Esophagus squamous epithelium (tissue), 5 donors: ENCODE measurements at regions of chr11 and their contacts with region 1.

Region 1: DNA sequence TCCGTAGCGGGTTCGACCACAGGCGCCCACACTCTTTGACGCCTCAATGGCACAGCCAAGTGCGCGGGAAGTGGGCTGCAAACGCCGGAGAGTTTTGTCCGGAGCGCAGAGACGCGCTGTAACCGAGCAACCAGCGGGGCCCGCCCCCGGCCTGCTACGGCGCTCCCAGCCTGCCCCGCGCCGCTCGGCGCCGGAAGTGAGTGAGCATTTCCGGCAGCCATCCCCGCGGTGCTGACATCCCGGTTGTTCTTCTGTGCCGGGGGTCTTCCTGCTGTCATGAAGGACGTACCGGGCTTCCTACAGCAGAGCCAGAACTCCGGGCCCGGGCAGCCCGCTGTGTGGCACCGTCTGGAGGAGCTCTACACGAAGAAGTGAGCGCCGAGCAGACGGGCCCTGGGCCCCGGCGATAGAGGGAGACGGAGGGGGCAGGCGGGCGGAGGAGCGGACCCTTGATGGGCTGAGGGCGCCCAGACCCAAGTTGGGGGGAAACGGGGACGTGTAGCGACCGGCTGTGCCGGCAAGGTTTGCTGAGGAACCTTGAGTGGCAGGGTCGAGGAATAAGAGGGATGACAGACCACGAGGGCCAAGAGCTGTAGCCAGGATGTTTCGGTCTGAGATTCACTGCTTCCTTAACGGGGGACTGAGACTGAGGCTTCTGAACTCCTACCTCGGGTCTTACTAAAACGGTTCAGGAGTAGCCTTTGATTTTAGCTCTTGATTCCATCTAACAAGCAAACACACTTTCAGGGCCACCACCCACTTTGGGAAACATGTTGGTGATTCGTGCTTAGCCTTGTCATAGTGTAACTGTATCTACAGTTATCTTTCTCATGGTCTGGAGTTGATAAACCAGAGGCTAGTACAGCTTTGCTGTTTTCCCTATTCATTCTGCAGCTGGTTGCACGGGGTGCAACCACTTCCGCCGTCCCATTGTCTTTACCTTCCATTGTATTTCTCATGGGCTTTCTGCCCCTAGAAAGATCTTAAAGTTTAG is at the start of gene PSMD13:
- DNase-seq: peak; percentile 34
- H3K4me3 ChIP-seq: peak within 1 kb of the TSS; percentile 60 to 87 (median 84)
- H3K27ac ChIP-seq: peak within 1 kb of the TSS; percentile 87 to 99 (median 98)
- H3K4me1 ChIP-seq: peaks cover 11 to 35% (median 22%) of the 10 kb centered on the region in 3 donors
- H3K27me3 ChIP-seq: no peaks in the 10 kb centered on the region
- CTCF ChIP-seq: no peak
- POLR2A ChIP-seq: peak in 2 of 4 donors; percentile 19 to 63
- total RNA-seq, gene PSMD13: 46.4 to 116 (median 105) TPM

Region 2: GRCh38 chr11:506238-506994 is 269.3 kb after region 1 on chr11:
- intact Hi-C with region 1: loop called (anchors 10 kb)
- DNase-seq: peak; percentile 80
- H3K4me3 ChIP-seq: peak overlapping the region; percentile 74 to 88 (median 82)
- H3K27ac ChIP-seq: peak overlapping the region; percentile 99 to 100 (median 100)
- H3K4me1 ChIP-seq: peaks cover 42 to 67% (median 45%) of the 10 kb centered on the region in 3 donors
- H3K27me3 ChIP-seq: no peaks in the 10 kb centered on the region
- CTCF ChIP-seq: peak in 1 of 6 experiments; percentile 24
- POLR2A ChIP-seq: peak in 3 of 4 donors; percentile 26 to 81 (median 77)